MCF 10A (cell line): ENCODE measurements at regions of chr15 and their contacts with region 1.

Region 1: GRCh38 chr15:55526559-55527036 is 18.6 kb upstream of the DNAAF4 start:
- DNase-seq: peak; percentile 56
- H3K4me3 Mint-ChIP-seq: no peak overlapping the region
- H3K27ac Mint-ChIP-seq: no peak overlapping the region
- H3K4me1 Mint-ChIP-seq: no peaks in the 10 kb centered on the region
- H3K27me3 Mint-ChIP-seq: peaks cover 39% of the 10 kb centered on the region
- CTCF ChIP-seq: peak; percentile 42

Region 2: GRCh38 chr15:55514414-55514850 is 12.2 kb before region 1 on chr15:
- CTCF ChIA-PET with region 1: interaction called, 25 read pairs
- POLR2A ChIA-PET with region 1: no interaction called
- intact Hi-C with region 1: no loop called
- DNase-seq: no peak
- H3K4me3 Mint-ChIP-seq: no peak overlapping the region
- H3K27ac Mint-ChIP-seq: no peak overlapping the region
- H3K4me1 Mint-ChIP-seq: no peaks in the 10 kb centered on the region
- H3K27me3 Mint-ChIP-seq: no peaks in the 10 kb centered on the region
- CTCF ChIP-seq: no peak

Region 3: GRCh38 chr15:55637086-55637485 is 110.5 kb after region 1 on chr15:
- CTCF ChIA-PET with region 1: interaction called, 11 read pairs
- POLR2A ChIA-PET with region 1: no interaction called
- intact Hi-C with region 1: loop called (anchors 1 kb)
- DNase-seq: no peak
- H3K4me3 Mint-ChIP-seq: no peak overlapping the region
- H3K27ac Mint-ChIP-seq: no peak overlapping the region
- H3K4me1 Mint-ChIP-seq: peaks cover 6% of the 10 kb centered on the region
- H3K27me3 Mint-ChIP-seq: no peaks in the 10 kb centered on the region
- CTCF ChIP-seq: no peak

Region 4: DNA sequence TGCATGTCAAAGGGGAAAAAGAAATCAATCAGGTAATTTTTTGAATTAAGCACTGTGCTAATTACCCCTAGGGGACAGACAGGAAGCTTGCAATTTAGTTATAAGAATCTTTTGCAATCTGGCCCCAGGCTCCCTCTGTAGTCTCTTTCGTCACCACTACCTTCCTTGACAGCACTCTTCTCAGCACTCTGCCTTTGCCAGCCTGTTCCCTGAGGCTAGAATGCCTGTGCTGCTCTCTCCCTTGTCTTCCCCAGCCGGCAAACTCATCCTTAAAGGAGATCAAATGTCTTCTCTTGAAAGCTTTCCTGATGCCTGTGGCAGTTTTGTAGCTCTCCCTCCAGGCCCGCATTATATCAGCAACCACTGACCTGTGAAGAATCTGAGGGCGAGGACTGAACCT is 248.7 kb after region 1 on chr15:
- CTCF ChIA-PET with region 1: no interaction called
- POLR2A ChIA-PET with region 1: no interaction called
- intact Hi-C with region 1: no loop called
- DNase-seq: peak; percentile 83
- H3K4me3 Mint-ChIP-seq: no peak overlapping the region
- H3K27ac Mint-ChIP-seq: peak overlapping the region; percentile 39
- H3K4me1 Mint-ChIP-seq: peaks cover 7% of the 10 kb centered on the region
- H3K27me3 Mint-ChIP-seq: peaks cover 7% of the 10 kb centered on the region
- CTCF ChIP-seq: no peak

Region 5: DNA sequence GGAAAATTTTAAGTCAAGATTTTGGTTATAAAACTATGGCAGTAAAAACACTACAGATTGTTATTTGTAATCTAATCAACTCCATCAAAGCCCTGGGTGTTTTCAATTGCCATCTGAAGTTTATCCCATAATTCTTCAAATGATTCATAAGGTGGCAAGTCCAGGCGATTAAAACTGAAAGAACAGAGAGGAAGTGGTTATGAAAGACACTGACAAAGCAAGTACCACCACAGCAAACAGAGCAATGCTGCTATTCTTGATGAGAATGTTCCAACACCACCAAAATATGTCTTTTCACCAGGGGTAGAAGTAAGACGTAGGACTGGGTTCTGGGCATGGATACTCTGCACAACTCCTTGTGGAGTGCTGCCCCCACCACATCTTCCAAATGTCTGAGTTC is 303.2 kb after region 1 on chr15:
- CTCF ChIA-PET with region 1: no interaction called
- POLR2A ChIA-PET with region 1: no interaction called
- intact Hi-C with region 1: no loop called
- DNase-seq: no peak
- H3K4me3 Mint-ChIP-seq: no peak overlapping the region
- H3K27ac Mint-ChIP-seq: no peak overlapping the region
- H3K4me1 Mint-ChIP-seq: peaks cover 5% of the 10 kb centered on the region
- H3K27me3 Mint-ChIP-seq: no peaks in the 10 kb centered on the region
- CTCF ChIP-seq: no peak